Adrenal gland (tissue), 19 donors: ENCODE measurements at regions of chr3 and their contacts with region 1.

Region 1: DNA sequence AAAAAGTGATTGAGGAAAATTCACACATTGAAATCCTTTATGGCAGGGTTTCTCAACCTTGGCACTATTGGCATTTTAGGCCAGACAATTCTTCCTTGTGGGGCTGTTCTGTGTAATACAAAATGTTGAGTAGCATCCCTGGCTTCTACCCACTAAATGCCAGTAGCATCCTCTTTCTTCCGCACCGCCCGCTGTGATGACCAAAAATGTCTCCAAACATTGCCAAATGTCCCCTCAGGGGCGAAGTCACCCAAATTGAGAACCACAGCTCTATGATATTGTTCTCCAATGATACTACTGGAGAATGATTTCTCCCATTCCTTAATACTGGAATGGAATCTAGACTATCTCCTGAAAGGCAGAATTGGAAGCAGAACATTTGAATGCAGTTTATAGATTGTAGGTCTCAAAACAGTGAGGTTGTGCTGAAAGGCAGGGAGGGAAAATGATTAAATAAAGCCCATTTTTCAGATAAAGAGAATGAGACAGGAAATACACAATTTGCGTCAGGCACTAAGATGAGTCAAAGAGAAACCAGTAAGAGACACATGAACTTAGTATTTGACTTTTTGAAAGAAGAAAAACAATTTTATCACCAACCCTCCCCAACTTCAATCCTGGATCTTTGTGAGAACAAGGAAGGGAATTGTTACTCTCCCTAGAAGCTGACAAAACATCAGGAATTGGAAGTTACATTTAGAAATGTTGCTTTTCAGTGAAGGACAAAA is 101.6 kb upstream of the TNIK start:
- DNase-seq: no peak
- H3K4me3 ChIP-seq: no peak overlapping the region
- H3K27ac ChIP-seq: no peak overlapping the region
- H3K4me1 ChIP-seq: peaks cover 0 to 4% of the 10 kb centered on the region in 2 donors
- H3K27me3 ChIP-seq: no peaks in the 10 kb centered on the region
- CTCF ChIP-seq: no peak
- POLR2A ChIP-seq: no peak

Region 2: GRCh38 chr3:170961616-170962400 is 600.0 kb before region 1 on chr3:
- intact Hi-C with region 1: loop called (anchors 5 to 10 kb)
- DNase-seq: peak in 2 of 7 donors; percentile 24 to 25
- H3K4me3 ChIP-seq: no peak overlapping the region
- H3K27ac ChIP-seq: no peak overlapping the region
- H3K4me1 ChIP-seq: no peaks in the 10 kb centered on the region
- H3K27me3 ChIP-seq: no peaks in the 10 kb centered on the region
- CTCF ChIP-seq: peak; percentile 33 to 79 (median 66)
- POLR2A ChIP-seq: no peak

Region 3: DNA sequence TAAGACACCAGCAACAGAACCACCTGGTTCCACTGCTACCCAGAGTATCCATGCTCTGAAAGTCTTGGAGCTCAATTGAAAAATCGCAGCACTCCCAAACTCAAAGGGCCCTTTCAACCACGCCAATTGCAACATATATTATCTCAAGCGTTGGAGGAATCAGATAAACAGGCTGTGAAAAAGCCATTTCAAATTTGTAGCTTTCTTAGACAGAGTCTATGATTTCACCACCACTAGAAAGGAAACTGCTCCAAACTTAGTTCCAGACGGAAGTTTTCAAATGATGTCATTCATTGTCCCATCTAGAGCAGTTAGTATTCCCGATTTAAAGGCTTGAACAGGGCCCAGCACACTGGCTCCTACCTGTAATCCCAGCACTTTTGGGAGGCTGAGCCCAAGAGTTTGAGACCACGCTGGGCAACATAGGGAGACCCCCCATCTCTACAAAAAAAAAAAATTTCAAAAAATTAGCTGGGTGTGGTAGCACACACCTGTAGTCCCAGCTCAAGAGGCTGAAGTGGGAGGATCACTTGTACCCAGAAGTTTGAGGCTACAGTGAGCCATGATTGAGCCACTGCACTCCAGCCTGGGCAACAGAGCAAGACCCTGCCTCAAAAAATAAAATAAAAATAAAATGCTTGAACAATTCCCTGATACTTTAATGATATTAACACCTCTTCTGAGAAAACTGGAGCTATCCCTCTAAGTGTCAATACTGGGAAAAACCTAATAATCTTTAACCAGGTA is 118.4 kb before region 1 on chr3:
- intact Hi-C with region 1: no loop called
- DNase-seq: no peak
- H3K4me3 ChIP-seq: no peak overlapping the region
- H3K27ac ChIP-seq: no peak overlapping the region
- H3K4me1 ChIP-seq: peaks cover 0 to 6% of the 10 kb centered on the region in 2 donors
- H3K27me3 ChIP-seq: no peaks in the 10 kb centered on the region
- CTCF ChIP-seq: no peak
- POLR2A ChIP-seq: no peak